ENCODE measurements at regions of chr17 and their contacts with region 1.

Region 1: DNA sequence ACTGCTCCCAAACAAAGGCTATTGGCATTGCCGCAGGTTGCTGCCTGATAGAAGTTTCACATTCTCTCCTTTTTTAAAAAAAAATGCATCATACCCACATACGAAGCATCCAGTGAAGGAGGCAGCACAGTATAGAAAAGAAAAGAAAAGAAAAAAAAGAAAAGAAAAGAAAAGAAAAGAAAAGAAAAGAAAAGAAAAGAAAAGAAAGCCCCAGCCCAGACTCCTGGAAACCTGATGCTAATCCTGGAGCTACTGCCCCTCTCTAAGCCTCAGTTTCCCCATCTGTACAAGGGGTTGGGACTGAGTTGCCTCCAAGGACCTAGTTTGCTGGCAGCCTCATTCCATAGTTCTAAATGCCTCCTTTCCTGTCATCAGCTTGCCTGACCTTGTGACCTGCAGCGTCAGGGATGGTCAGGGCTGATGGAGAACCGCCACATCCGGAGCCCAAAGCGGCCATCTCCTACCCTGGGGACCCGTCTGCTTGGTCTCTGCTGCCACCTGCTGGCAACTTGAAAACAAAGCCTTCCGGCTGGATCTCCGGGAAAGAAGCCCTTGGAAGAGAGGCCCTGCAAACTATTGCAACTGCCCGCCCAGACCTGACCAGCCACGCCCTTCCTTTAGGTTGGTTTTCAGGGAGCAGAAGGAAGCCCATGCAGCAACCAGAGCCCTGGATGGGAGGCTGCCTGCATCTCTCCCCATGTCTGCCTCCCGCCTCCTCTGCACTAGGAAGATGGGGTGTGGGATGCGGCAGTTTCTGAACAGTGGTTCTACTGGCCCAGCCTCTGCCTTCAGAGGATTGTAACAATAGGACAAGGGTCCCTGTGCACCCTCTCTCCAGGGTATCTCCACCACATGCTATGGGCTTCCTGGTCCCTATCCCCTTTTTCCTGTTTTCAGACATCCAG is 13.0 kb downstream of the AIPL1 start:
- DNase-seq: peak; percentile 66 to 95 (median 86)

Region 2: DNA sequence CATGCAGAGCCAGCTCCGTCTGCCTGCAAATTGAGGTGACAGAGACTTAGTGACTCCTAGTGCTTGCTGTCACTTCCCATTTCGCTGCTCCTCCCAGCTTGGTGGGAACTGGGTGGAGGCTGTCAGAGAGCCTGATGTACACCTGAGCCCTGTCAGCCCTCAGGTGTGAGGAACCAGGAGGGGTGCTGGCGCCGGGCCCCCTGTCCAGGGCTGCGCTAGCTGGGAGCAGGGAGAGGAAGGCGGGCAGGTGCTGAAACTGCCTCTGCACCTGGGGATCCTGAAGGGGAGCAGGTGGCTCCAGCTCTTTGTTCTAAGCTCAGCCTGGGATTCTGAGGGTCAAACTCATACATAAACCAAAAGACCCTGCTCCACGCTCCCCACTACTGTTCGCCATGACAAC is 362.5 kb before region 1 on chr17:
- intact Hi-C with region 1: loop called (anchors 10 kb)
- DNase-seq: no peak

Region 3: DNA sequence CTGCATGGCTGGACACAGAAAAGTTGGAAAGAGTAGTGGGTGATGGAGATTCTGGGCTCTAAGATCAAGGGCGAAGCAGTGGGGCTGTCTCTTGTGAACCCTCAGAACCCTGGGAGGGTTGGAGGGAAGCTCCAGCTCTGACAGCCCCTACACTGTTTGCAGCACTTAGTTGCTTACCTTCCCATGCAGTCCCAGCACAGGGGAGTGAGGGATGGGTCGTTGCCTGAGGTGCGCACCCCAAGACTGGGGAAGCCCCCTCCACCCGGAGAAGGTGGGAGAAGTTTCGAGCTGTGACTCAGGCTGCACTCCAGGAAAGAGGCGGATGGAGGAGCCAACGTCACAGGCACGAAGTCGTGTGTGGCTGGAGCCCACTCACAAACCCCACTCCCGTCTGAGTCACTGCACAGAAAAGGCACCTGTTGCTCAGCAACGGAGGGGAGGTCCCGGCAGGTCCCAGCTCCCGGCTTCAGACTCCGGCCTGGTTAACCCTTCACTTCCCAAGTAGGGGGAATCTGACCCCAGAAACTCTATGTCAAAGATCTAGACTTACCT is 47.1 kb before region 1 on chr17:
- intact Hi-C with region 1: no loop called
- DNase-seq: peak; percentile 56 to 95 (median 81)